ENCODE measurements at regions of chr17 and their contacts with region 1.

Region 1: GRCh38 chr17:72725433-72726068 is 366.9 kb downstream of the SLC39A11 start:
- DNase-seq: no peak
- H3K4me3 ChIP-seq: no peak overlapping the region
- H3K27ac ChIP-seq: no peak overlapping the region
- H3K4me1 ChIP-seq: no peaks in the 10 kb centered on the region
- H3K27me3 ChIP-seq: no peaks in the 10 kb centered on the region
- CTCF ChIP-seq: peak; percentile 15 to 60 (median 44)
- POLR2A ChIP-seq: no peak

Region 2: GRCh38 chr17:72691586-72691985 is 34.0 kb before region 1 on chr17:
- intact Hi-C with region 1: no loop called
- DNase-seq: no peak
- H3K4me3 ChIP-seq: no peak overlapping the region
- H3K27ac ChIP-seq: no peak overlapping the region
- H3K4me1 ChIP-seq: peaks cover 19% of the 10 kb centered on the region
- H3K27me3 ChIP-seq: no peaks in the 10 kb centered on the region
- CTCF ChIP-seq: no peak
- POLR2A ChIP-seq: no peak

Region 3: DNA sequence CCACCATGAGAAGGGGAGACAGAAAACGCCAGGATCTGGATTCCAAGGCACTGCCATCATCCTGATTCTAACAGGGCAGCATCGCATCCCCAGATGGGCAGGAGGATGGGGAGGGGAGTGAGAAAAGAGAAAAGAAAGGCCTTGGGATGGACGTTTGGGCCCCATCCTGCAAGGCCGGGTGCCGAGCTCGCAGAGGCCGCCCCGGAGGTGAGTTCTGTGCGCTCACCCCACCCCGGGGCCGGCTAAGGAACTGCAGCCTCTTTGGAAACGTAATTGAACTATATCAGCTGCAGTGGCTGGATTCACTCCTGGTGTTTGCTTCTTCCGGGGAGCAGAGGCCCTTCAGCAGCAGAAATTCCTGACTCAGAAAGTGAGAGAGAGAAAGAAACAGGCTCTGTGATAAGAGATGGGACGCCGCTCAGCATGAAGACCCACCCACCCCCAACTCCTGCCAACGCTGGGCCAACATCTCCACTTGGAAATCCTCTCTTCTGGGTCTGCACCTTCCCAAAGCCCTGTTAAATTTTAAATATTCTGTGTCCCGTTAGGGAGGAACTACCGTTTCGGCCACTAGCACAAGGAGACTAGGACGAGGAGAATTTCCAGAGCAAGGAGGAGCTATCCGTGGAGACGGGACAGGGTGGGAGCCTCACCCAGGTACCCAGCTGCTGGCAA is 430.8 kb after region 1 on chr17:
- intact Hi-C with region 1: loop called (anchors 10 kb)
- DNase-seq: no peak
- H3K4me3 ChIP-seq: no peak overlapping the region
- H3K27ac ChIP-seq: no peak overlapping the region
- H3K4me1 ChIP-seq: no peaks in the 10 kb centered on the region
- H3K27me3 ChIP-seq: no peaks in the 10 kb centered on the region
- CTCF ChIP-seq: peak in 2 of 3 experiments; percentile 49 to 75
- POLR2A ChIP-seq: no peak

Region 4: DNA sequence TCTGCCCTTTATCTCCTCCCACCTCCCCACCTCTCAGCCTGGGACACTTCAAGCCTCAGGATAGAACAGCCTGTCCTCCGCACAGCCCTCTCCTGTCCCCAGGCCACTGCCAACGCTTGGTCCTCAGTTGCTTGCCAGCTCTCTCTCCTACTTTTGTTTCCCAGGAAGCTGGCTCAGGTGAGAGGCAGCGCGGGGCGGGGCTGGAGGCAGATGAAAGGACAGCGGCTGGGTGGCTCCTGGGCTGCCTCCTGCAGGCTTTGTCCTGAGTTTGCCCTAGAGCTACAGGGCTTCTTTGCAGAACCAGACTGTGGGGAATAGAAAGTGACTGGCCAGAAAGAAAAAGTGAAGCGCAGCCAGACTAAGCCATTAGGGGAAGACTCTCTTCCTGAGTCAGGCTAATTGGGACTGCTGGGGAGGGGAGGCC is 634.4 kb after region 1 on chr17:
- intact Hi-C with region 1: loop called (anchors 10 kb)
- DNase-seq: no peak
- H3K4me3 ChIP-seq: no peak overlapping the region
- H3K27ac ChIP-seq: no peak overlapping the region
- H3K4me1 ChIP-seq: peaks cover 23% of the 10 kb centered on the region
- H3K27me3 ChIP-seq: no peaks in the 10 kb centered on the region
- CTCF ChIP-seq: no peak
- POLR2A ChIP-seq: no peak

Region 5: DNA sequence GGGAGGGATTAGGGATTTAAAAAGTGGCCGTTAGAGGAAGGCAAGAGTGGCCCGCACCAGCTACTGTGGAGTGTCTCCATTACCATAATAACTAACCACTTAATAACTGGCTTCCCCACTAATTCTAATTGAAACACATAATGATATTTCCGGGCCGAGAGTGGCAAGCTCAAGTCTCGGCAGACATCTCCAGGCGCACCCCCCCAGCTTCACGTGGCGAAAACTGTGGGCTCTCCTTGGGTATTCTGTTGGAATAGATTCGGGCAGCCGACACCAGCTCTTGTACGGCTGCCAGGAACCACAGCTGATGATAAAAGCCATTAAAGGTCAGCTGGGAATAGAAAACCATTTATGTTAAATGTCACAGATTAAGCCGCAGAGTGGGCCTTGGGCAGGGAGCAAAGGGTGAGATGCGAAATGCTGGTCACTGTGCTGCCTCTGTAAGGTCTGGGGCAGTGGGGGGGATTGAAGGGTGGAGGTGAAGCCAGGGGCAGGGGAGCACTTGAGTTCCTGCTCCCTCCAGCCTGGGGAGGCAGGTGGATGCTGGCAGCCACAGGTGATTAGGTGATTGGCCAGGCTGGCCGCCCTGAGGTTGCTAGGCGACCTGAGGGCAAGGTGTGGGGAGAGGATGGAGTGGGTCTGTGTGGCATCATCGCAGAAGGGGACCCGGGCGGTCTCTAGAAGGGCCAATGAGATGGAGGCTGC is 1034.3 kb after region 1 on chr17:
- intact Hi-C with region 1: no loop called
- DNase-seq: no peak
- H3K4me3 ChIP-seq: no peak overlapping the region
- H3K27ac ChIP-seq: no peak overlapping the region
- H3K4me1 ChIP-seq: no peaks in the 10 kb centered on the region
- H3K27me3 ChIP-seq: no peaks in the 10 kb centered on the region
- CTCF ChIP-seq: no peak
- POLR2A ChIP-seq: no peak

Measured in vagina (tissue), 2 donors.